HepG2 (cell line): ENCODE measurements at regions of chr3 and their contacts with region 1.

Region 1: DNA sequence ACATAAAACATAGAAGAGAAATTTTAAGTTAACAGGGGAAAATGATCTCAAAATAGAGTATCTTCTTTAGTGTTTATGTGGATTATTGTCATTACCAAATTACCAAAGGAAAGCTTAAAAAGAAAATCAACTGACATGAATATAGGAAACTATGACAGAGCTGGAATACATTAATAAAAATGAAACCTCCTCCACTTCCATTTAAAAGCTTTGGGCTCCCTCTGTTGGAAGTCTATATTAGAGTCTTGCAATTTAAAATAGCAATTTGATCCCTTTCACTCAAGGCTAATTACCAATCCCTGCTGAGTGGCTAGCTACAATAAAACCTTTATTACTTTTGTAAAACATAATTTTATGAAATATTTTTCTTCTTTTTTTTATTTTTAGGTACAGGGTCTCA is 61.4 kb upstream of the IMPG2 start:
- DNase-seq: peak; percentile 23
- ATAC-seq: no peak; the same call in 2 of the 3 replicates
- H3K4me3 ChIP-seq: no peak overlapping the region
- H3K27ac ChIP-seq: no peak overlapping the region
- H3K4me1 ChIP-seq: no peaks in the 10 kb centered on the region
- H3K27me3 ChIP-seq: no peaks in the 10 kb centered on the region; a peak in 1 of 5 replicates
- CTCF ChIP-seq: peak; percentile 36; the same call in 1 of the 2 replicates
- EP300 ChIP-seq: no peak
- POLR2A ChIP-seq: no peak
- RAD21 ChIP-seq: no peak

Region 2: GRCh38 chr3:100893590-100893989 is 488.2 kb before region 1 on chr3:
- CTCF ChIA-PET with region 1: no interaction called
- POLR2A ChIA-PET with region 1: no interaction called
- in situ Hi-C with region 1: no loop called
- intact Hi-C with region 1: loop called (anchors 5 kb)
- DNase-seq: peak; percentile 3
- ATAC-seq: peak; percentile 75
- H3K4me3 ChIP-seq: no peak overlapping the region
- H3K27ac ChIP-seq: no peak overlapping the region
- H3K4me1 ChIP-seq: no peaks in the 10 kb centered on the region
- H3K27me3 ChIP-seq: no peaks in the 10 kb centered on the region
- CTCF ChIP-seq: peak; percentile 55
- EP300 ChIP-seq: no peak
- POLR2A ChIP-seq: no peak
- RAD21 ChIP-seq: no peak

Region 3: GRCh38 chr3:101069901-101070798 is 311.7 kb before region 1 on chr3:
- CTCF ChIA-PET with region 1: interaction called, 6 read pairs
- POLR2A ChIA-PET with region 1: no interaction called
- in situ Hi-C with region 1: loop called (anchors 10 kb)
- intact Hi-C with region 1: loop called (anchors 1 kb)
- DNase-seq: peak; percentile 31
- ATAC-seq: peak; percentile 99
- H3K4me3 ChIP-seq: no peak overlapping the region
- H3K27ac ChIP-seq: no peak overlapping the region
- H3K4me1 ChIP-seq: no peaks in the 10 kb centered on the region
- H3K27me3 ChIP-seq: no peaks in the 10 kb centered on the region; a peak in 1 of 5 replicates
- CTCF ChIP-seq: peak; percentile 79
- EP300 ChIP-seq: no peak
- POLR2A ChIP-seq: no peak
- RAD21 ChIP-seq: peak; percentile 46; the same call in 1 of the 2 replicates

Region 4: DNA sequence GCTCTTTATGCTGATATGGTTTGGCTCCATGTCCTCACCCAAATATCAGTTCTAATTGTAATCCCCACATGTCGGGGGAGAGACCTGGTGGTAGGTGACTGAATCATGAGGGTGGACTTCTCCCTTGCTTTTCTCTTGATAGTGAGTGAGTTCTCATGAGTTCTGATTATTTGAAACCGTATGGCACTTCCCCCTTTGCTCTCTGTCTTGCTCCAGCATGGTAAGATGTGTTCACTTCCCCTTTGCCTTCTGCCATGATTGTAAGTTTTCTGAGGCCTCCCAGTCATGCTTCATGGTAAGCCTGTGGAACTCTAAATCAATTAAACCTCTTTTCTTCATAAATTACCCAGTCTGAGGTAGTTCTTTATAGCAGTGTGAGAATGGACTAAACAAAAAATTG is 169.1 kb before region 1 on chr3:
- CTCF ChIA-PET with region 1: no interaction called
- POLR2A ChIA-PET with region 1: no interaction called
- in situ Hi-C with region 1: no loop called
- intact Hi-C with region 1: loop called (anchors 5 kb)
- DNase-seq: no peak
- ATAC-seq: no peak
- H3K4me3 ChIP-seq: no peak overlapping the region
- H3K27ac ChIP-seq: no peak overlapping the region
- H3K4me1 ChIP-seq: no peaks in the 10 kb centered on the region
- H3K27me3 ChIP-seq: no peaks in the 10 kb centered on the region; a peak in 1 of 5 replicates
- CTCF ChIP-seq: no peak
- EP300 ChIP-seq: no peak
- POLR2A ChIP-seq: no peak
- RAD21 ChIP-seq: no peak